Activated B cell treated with CpG ODN at 0.5 μM for 24 hours (primary cell): ENCODE measurements at regions of chr22 and their contacts with region 1.

Region 1: GRCh38 chr22:28800308-28801077 is at the start of gene XBP1:
- DNase-seq: peak; percentile 85
- ATAC-seq: peak; percentile 93
- H3K4me3 Mint-ChIP-seq: peak within 1 kb of the TSS; percentile 98
- H3K27ac Mint-ChIP-seq: peak within 1 kb of the TSS; percentile 98
- H3K4me1 Mint-ChIP-seq: peaks cover 56% of the 10 kb centered on the region
- H3K27me3 Mint-ChIP-seq: no peaks in the 10 kb centered on the region
- CTCF ChIP-seq: no peak
- total RNA-seq, gene XBP1: 57.7 and 67.3 TPM in 2 replicates

Region 2: DNA sequence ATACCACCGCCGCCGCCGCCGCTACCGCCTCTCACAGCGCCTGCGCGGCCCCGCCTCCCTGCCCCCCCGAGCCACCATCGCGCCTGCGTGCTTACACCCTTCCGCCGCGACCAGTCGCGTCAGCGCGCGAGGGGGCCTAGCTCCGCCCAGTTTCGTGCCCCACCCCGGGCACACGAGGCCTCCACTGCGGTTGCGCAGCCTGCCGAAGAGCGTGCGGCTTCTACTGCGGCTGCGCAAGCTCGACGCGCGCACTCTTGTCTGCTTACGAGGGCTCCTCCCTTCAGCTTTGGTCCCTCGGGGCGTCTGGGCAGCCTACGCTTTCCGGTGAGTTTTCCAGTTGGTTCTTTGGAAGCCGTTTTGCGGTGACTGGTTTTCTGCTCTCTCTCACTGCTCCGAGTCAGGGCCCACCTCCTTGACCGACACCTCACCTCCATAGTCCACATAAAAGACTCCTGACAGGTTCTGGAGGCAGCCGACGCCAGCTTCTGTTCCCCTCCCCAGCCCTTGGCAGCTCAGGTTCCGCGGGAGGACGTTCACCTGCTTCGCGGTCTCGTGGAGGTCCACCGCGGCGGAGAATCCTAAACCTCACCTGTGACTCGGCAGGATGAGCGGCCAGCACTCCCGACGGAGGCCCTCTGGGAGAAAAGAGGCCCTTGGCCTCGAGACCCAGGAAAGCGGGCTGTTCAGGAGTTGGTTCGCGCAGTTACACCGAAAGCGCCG is 881.1 kb before region 1 on chr22 and contains the start of gene PITPNB:
- CTCF ChIA-PET with region 1: no interaction called
- POLR2A ChIA-PET with region 1: interaction called, 3 read pairs
- intact Hi-C with region 1: loop called (anchors 10 kb)
- DNase-seq: peak; percentile 99
- ATAC-seq: peak; percentile 83
- H3K4me3 Mint-ChIP-seq: peak within 1 kb of the TSS; percentile 99
- H3K27ac Mint-ChIP-seq: peak within 1 kb of the TSS; percentile 99
- H3K4me1 Mint-ChIP-seq: peaks cover 56% of the 10 kb centered on the region
- H3K27me3 Mint-ChIP-seq: no peaks in the 10 kb centered on the region
- CTCF ChIP-seq: no peak
- total RNA-seq, gene PITPNB: 77.1 and 82.5 TPM in 2 replicates

Region 3: DNA sequence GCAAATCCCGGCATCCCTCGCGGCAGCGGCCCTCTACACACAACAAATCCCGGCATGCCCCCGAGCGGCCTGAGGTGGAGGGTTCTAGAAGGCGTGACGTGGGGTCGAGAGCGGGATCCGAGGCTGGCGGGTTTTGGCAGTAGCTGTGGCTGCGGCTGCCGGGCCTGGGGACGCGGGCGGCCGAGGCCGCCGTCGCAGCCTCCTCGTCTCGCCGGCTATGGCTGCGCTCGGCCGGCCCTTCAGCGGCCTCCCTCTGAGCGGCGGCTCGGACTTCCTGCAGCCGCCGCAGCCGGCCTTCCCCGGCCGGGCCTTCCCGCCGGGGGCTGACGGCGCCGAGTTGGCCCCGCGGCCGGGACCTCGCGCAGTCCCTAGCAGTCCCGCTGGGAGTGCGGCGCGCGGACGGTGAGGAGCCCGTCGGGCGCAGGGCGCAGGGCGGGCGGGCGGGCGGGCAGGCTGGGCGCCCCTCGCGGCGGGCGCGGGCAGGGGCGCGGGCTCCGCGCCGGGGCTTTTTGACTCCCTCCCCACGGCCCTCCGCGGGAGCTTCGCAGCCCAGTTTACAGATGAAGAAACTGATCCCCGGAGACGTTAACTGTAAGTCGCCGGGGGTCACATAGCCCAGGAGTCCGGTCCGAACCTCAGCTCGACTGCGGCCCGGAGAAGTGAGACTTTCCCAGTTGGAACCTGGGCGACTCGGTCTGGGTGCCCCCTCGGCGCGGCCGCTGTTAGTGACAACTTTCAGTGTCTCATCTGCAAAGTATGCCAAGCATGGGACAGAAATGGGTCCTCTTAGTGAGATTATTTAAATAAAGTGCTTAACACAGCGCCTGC is 27.6 kb before region 1 on chr22 and contains the start of gene CCDC117:
- CTCF ChIA-PET with region 1: no interaction called
- POLR2A ChIA-PET with region 1: interaction called, 41 read pairs
- intact Hi-C with region 1: loop called (anchors 1 kb)
- DNase-seq: peak; percentile 87
- ATAC-seq: peak; percentile 91
- H3K4me3 Mint-ChIP-seq: peak within 1 kb of the TSS; percentile 91
- H3K27ac Mint-ChIP-seq: peak within 1 kb of the TSS; percentile 91
- H3K4me1 Mint-ChIP-seq: peaks cover 28% of the 10 kb centered on the region
- H3K27me3 Mint-ChIP-seq: no peaks in the 10 kb centered on the region
- CTCF ChIP-seq: no peak
- total RNA-seq, gene CCDC117: 16.3 and 21.9 TPM in 2 replicates

Region 4: DNA sequence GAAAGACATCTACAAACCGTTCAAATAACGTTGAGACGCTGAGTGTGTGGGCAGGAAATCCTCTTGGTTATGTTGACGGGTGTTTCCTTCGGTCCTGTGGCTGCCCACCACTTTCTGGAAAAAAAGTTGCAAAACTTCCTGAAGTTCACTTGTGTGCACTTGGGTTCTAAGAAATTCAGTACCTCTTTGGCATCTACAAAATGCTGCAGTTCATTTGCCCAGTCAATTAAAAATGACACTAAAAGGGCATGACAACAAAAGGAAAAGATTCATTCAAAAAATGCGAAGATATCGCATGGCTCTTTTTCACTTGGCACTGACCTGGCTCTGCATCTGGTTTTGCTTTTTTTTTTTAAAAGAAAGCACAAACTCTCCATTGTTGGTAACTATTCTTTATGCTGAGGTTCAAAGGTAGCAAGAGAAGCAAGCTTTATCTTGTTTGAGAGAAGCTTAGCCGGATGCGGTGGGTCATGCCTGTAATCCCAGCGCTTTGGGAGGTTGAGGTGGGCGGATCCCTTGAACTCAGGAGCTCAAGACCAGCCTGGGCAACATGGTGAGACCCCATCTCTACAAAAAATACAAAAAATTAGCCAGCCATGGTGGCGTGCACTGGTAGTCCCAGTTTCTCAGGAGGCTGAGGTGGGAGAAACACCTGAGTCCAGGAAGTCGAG is 10.5 kb after region 1 on chr22:
- CTCF ChIA-PET with region 1: no interaction called
- POLR2A ChIA-PET with region 1: interaction called, 32 read pairs
- intact Hi-C with region 1: no loop called
- DNase-seq: no peak
- ATAC-seq: no peak
- H3K4me3 Mint-ChIP-seq: peak overlapping the region; percentile 65
- H3K27ac Mint-ChIP-seq: no peak overlapping the region
- H3K4me1 Mint-ChIP-seq: peaks cover 30% of the 10 kb centered on the region
- H3K27me3 Mint-ChIP-seq: no peaks in the 10 kb centered on the region
- CTCF ChIP-seq: no peak

Region 5: DNA sequence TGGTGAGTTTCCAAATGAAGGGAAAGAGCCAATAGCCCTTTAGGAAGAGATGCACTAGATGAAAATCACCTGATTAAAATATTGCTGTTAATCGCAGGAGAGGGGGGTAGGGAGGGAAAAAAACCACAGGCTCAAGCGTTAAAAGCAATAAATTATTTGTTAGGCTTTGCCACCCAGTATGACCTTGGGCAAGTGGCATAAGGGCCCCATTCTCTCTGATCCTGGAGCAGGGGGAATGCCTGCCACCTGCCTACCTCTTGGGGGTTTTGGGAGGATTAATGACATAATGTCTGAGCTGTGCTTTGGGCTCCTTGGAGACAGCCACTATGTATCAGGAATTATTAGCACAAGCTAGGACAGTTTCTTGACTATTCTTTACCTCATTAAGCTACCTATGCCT is 162.9 kb after region 1 on chr22:
- CTCF ChIA-PET with region 1: no interaction called
- POLR2A ChIA-PET with region 1: no interaction called
- intact Hi-C with region 1: no loop called
- DNase-seq: no peak
- ATAC-seq: no peak
- H3K4me3 Mint-ChIP-seq: no peak overlapping the region
- H3K27ac Mint-ChIP-seq: no peak overlapping the region
- H3K4me1 Mint-ChIP-seq: no peaks in the 10 kb centered on the region
- H3K27me3 Mint-ChIP-seq: peaks cover 41% of the 10 kb centered on the region
- CTCF ChIP-seq: no peak

Region 6: DNA sequence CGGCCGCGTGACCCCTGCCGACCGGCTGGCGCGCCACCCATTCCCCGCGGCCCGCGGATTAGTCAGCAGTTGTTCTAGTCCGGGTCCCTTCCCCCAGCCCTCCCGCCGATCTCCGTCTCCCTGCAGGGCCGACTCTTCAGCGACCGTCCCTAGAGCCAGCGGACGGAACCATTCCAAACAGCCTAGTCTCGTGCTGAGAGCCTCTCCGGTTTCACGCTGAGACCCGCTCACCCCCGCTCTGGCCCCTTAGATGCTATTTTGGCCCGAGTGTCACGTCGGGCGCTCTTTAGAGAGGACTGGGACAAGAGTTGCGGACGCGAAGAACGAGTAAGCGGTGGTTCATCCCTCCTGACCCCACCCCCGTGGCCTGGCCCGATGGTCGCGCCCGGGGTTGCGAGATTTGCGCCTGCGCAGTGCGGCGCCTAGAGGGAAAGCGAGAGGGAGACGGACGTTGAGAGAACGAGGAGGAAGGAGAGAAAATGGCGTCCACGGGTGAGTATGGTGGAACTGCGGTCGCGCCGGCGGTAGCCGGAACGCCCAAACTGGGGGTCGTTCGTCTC is 467.4 kb after region 1 on chr22 and contains the starts of genes EWSR1 and RHBDD3:
- CTCF ChIA-PET with region 1: no interaction called
- POLR2A ChIA-PET with region 1: interaction called, 4 read pairs
- intact Hi-C with region 1: loop called (anchors 5 kb)
- DNase-seq: peak; percentile 99
- ATAC-seq: peak; percentile 86
- H3K4me3 Mint-ChIP-seq: peak within 1 kb of the TSS; percentile 96
- H3K27ac Mint-ChIP-seq: peak within 1 kb of the TSS; percentile 100
- H3K4me1 Mint-ChIP-seq: peaks cover 58% of the 10 kb centered on the region
- H3K27me3 Mint-ChIP-seq: no peaks in the 10 kb centered on the region
- CTCF ChIP-seq: no peak
- total RNA-seq, gene EWSR1: 347 and 382 TPM in 2 replicates
- total RNA-seq, gene RHBDD3: 17.7 and 17.9 TPM in 2 replicates

Region 7: GRCh38 chr22:29284196-29284595 is 483.7 kb after region 1 on chr22:
- CTCF ChIA-PET with region 1: no interaction called
- POLR2A ChIA-PET with region 1: no interaction called
- intact Hi-C with region 1: no loop called
- DNase-seq: no peak
- ATAC-seq: no peak
- H3K4me3 Mint-ChIP-seq: no peak overlapping the region
- H3K27ac Mint-ChIP-seq: no peak overlapping the region
- H3K4me1 Mint-ChIP-seq: no peaks in the 10 kb centered on the region
- H3K27me3 Mint-ChIP-seq: no peaks in the 10 kb centered on the region
- CTCF ChIP-seq: no peak